ENCODE measurements at regions of chr2 and their contacts with region 1.

Region 1: GRCh38 chr2:29010946-29011345 is 29.8 kb downstream of the TOGARAM2 start:
- DNase-seq: peak; percentile 71
- H3K4me3 Mint-ChIP-seq: peak overlapping the region; percentile 54
- H3K27ac Mint-ChIP-seq: peak overlapping the region; percentile 96
- H3K4me1 Mint-ChIP-seq: peaks cover 73% of the 10 kb centered on the region
- H3K27me3 Mint-ChIP-seq: no peaks in the 10 kb centered on the region

Region 2: DNA sequence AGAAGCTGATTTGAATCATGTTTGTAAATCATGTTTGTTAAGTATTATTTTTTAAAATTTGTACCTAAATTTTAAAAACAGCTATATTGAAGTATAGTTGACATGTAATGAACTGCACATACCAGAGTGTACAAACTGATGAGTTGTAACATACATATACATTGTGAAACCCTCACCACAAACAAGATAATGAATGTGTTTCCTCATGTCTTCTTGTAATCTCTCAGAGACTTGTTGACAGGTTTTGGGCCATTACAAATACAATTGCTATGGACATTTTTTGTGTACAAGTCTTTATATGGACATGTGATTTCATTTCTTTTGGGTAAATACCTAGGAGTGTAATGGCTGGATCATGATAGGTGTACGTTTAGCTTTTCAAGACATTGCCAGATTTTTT is 95.0 kb before region 1 on chr2:
- CTCF ChIA-PET with region 1: no interaction called
- DNase-seq: no peak
- H3K4me3 Mint-ChIP-seq: no peak overlapping the region
- H3K27ac Mint-ChIP-seq: no peak overlapping the region
- H3K4me1 Mint-ChIP-seq: peaks cover 3% of the 10 kb centered on the region
- H3K27me3 Mint-ChIP-seq: no peaks in the 10 kb centered on the region

Region 3: DNA sequence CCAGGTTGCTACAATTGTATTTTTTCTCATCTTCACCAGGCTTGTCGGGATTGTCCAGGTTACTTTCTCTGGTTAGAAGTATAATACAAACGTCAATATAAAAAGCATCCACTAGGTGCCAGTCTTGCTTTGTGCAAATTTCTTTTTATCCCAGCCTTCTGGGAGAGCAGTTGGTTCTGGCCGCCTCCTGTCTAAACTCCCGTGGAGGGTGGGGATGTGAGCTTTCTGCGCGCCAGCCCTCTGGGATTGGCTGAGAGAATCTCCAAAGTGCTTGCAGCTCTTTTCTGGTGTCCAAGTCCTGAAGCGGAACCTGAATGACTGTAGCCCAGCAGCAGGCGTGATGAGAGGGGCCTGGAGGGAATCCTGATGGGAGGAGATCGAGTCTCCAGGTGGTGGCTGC is 52.3 kb before region 1 on chr2:
- CTCF ChIA-PET with region 1: interaction called, 11 read pairs
- DNase-seq: peak; percentile 56
- H3K4me3 Mint-ChIP-seq: no peak overlapping the region
- H3K27ac Mint-ChIP-seq: no peak overlapping the region
- H3K4me1 Mint-ChIP-seq: peaks cover 6% of the 10 kb centered on the region
- H3K27me3 Mint-ChIP-seq: peaks cover 39% of the 10 kb centered on the region

Measured in activated naive CD4-positive, alpha-beta T cell treated with anti-CD3 and anti-CD28 coated beads, Interleukin-2, amount 10 ng/mL, durations not matched to agents 7 days and 5 days (primary cell).